ENCODE measurements at regions of chr4 and their contacts with region 1.

Region 1: DNA sequence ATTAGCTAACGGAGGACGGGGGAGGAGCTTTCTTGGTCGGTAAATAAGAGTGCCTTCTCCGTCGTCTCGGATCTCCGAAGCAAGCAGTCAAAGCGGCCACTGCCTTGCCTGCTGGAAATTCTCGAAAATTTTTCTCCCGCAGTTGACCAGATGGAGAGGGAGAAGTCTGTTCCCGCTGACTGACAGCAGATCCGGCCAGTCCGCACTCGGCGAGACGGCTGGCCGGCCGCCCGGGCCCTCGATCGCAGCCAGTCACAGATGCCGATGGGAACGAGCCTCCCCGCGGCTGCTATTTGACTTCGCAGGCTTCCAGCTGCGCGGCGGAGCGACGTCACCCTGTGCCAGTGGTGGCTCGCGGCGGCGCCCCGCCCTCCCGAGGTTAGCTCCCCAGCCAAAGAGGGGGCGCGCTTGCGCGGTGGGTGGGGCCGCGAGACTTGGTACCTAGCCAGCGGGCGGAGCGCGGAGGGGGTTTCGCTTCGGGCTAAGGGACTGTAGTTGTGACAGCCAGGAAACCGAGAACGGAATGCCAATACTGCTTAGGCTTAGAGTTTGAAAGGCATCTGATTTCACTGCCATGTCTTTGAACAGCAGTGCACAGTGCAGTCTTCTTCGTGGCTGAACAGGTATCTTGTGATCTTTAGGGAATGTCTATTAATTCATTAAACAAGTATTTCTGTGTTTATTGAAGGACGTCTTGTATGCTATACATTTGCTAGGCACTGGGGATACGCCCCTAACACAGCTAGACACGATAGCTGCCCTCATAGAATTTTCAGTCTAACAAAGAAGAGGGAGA is at the start of gene PPM1K:
- DNase-seq: peak; percentile 98 to 100 (median 99)
- ATAC-seq: peak; percentile 92
- H3K4me3 ChIP-seq: peak within 1 kb of the TSS; percentile 87
- H3K4me3 Mint-ChIP-seq: peak within 1 kb of the TSS; percentile 90 to 99 (median 97)
- H3K27ac ChIP-seq: peak within 1 kb of the TSS; percentile 96
- H3K27ac Mint-ChIP-seq: peak within 1 kb of the TSS; percentile 92 to 100 (median 99)
- H3K4me1 ChIP-seq: peaks cover 21 to 30% of the 10 kb centered on the region in 2 donors
- H3K4me1 Mint-ChIP-seq: peaks cover 32 to 52% (median 47%) of the 10 kb centered on the region in 7 donors
- H3K27me3 ChIP-seq: no peaks in the 10 kb centered on the region
- H3K27me3 Mint-ChIP-seq: no peaks in the 10 kb centered on the region
- total RNA-seq, gene PPM1K: 72.1 to 92.7 (median 91.9) TPM

Region 2: DNA sequence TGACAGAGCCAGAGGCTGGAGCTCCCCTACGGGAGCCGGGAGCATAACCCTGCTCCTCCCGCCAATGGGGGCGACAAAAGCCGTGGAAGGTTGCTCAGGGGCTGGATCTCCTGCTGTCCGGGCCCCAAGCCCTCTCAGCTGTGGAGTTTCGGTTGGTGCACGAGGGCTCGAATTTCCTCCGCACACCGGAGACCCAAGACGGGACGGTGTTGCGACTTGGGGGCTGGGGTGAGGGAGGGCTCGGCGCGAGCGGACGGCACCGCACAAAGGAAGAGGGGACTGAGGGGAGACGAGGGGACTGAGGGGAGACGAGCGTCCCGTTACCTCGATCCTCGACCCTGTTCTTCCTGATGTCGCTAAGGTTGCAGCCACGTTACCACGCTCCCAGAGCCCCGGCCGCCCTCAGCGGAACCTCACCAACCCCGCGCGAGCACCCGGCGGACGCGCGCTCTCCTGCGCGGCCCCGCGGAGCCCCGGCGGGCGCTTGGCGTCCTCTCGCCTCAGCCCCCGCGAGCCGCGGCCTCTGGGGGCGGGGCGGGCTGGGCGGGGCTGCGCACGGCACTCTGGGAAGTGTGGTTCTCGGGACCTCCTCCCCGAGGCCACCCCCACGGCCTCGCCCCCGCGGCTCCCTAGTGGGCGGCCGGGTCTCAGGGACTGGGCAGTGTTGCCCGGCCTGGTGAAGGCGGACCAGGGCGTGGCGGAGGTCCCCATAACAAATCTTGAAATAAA is 1064.4 kb before region 1 on chr4 and contains the start of gene KLHL8:
- CTCF ChIA-PET with region 1: no interaction called
- POLR2A ChIA-PET with region 1: no interaction called
- intact Hi-C with region 1: loop called in 1 of 2 experiments (anchors 1 kb)
- DNase-seq: peak; percentile 82 to 94 (median 89)
- ATAC-seq: peak; percentile 97
- H3K4me3 ChIP-seq: peak within 1 kb of the TSS; percentile 97
- H3K4me3 Mint-ChIP-seq: peak within 1 kb of the TSS; percentile 73 to 99 (median 94)
- H3K27ac ChIP-seq: peak within 1 kb of the TSS; percentile 92
- H3K27ac Mint-ChIP-seq: peak within 1 kb of the TSS; percentile 71 to 95 (median 91)
- H3K4me1 ChIP-seq: peaks cover 0 to 8% of the 10 kb centered on the region in 2 donors
- H3K4me1 Mint-ChIP-seq: peaks cover 6 to 32% (median 17%) of the 10 kb centered on the region in 7 donors
- H3K27me3 ChIP-seq: no peaks in the 10 kb centered on the region
- H3K27me3 Mint-ChIP-seq: peaks cover 0 to 14% (median 0%) of the 10 kb centered on the region in 5 donors
- total RNA-seq, gene KLHL8: 10.9 to 15.7 (median 11.6) TPM

Region 3: GRCh38 chr4:87783781-87784180 is 500.9 kb before region 1 on chr4:
- CTCF ChIA-PET with region 1: no interaction called
- POLR2A ChIA-PET with region 1: no interaction called
- intact Hi-C with region 1: no loop called
- DNase-seq: no peak
- ATAC-seq: no peak
- H3K4me3 ChIP-seq: no peak overlapping the region
- H3K4me3 Mint-ChIP-seq: no peak overlapping the region
- H3K27ac ChIP-seq: no peak overlapping the region
- H3K27ac Mint-ChIP-seq: no peak overlapping the region
- H3K4me1 ChIP-seq: no peaks in the 10 kb centered on the region
- H3K4me1 Mint-ChIP-seq: no peaks in the 10 kb centered on the region
- H3K27me3 ChIP-seq: no peaks in the 10 kb centered on the region
- H3K27me3 Mint-ChIP-seq: peaks cover 0 to 7% (median 0%) of the 10 kb centered on the region in 5 donors

Region 4: DNA sequence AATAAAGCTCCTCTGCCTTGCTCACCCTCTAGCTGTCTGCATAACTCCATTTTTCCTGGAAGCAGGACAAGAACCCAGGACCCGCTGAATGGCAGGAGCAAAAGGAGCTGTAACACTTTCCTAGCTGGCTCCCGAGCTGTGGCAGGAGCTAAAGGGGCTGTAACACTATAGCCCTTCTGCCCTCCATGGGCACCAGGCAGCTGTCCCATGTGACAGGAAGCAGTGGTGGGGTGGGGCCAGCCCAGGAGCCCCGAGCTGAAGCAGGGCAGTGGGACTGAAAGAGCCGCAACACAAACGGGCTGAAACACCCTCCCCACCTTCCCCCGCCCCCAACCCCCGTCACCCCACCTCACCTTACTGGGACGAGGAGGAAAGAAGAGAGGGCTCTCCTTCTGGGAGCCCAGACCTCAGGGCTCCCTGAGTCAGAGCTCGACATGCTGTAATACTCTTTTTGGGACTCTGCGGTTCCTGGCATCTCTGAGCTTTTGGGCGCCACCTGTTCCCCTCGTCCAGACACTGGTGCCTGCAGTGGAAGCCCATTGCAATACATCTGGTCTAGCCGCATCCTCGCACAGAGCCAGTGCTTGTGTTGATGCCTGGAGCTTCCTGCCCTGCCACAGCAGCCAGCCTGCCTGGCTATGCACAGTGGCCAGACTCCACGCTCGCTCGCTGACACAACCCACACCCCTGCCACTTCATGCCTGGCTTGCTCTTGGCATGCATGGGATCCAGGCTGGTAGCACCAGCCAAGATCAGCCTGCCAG is 39.6 kb before region 1 on chr4:
- CTCF ChIA-PET with region 1: no interaction called
- POLR2A ChIA-PET with region 1: interaction called, 25 read pairs
- intact Hi-C with region 1: loop called in 1 of 2 experiments (anchors 1 kb)
- DNase-seq: peak; percentile 14 to 45 (median 28)
- ATAC-seq: peak; percentile 80
- H3K4me3 ChIP-seq: peak overlapping the region; percentile 46
- H3K4me3 Mint-ChIP-seq: peak overlapping the region; percentile 39 to 86 (median 76)
- H3K27ac ChIP-seq: no peak overlapping the region
- H3K27ac Mint-ChIP-seq: peak overlapping the region in 8 of 9 donors; percentile 17 to 86 (median 55)
- H3K4me1 ChIP-seq: peaks cover 0 to 4% of the 10 kb centered on the region in 2 donors
- H3K4me1 Mint-ChIP-seq: peaks cover 7 to 19% (median 16%) of the 10 kb centered on the region in 7 donors
- H3K27me3 ChIP-seq: no peaks in the 10 kb centered on the region
- H3K27me3 Mint-ChIP-seq: peaks cover 0 to 2% (median 0%) of the 10 kb centered on the region in 5 donors

Region 5: GRCh38 chr4:88369936-88370335 is 85.3 kb after region 1 on chr4:
- CTCF ChIA-PET with region 1: interaction called, 3 read pairs
- POLR2A ChIA-PET with region 1: interaction called, 6 read pairs
- intact Hi-C with region 1: loop called in 1 of 2 experiments (anchors 1 kb)
- DNase-seq: no peak
- ATAC-seq: no peak
- H3K4me3 ChIP-seq: no peak overlapping the region
- H3K4me3 Mint-ChIP-seq: no peak overlapping the region
- H3K27ac ChIP-seq: no peak overlapping the region
- H3K27ac Mint-ChIP-seq: no peak overlapping the region
- H3K4me1 ChIP-seq: no peaks in the 10 kb centered on the region
- H3K4me1 Mint-ChIP-seq: peaks cover 0 to 22% (median 0%) of the 10 kb centered on the region in 7 donors
- H3K27me3 ChIP-seq: no peaks in the 10 kb centered on the region
- H3K27me3 Mint-ChIP-seq: peaks cover 0 to 3% (median 0%) of the 10 kb centered on the region in 5 donors

Region 6: DNA sequence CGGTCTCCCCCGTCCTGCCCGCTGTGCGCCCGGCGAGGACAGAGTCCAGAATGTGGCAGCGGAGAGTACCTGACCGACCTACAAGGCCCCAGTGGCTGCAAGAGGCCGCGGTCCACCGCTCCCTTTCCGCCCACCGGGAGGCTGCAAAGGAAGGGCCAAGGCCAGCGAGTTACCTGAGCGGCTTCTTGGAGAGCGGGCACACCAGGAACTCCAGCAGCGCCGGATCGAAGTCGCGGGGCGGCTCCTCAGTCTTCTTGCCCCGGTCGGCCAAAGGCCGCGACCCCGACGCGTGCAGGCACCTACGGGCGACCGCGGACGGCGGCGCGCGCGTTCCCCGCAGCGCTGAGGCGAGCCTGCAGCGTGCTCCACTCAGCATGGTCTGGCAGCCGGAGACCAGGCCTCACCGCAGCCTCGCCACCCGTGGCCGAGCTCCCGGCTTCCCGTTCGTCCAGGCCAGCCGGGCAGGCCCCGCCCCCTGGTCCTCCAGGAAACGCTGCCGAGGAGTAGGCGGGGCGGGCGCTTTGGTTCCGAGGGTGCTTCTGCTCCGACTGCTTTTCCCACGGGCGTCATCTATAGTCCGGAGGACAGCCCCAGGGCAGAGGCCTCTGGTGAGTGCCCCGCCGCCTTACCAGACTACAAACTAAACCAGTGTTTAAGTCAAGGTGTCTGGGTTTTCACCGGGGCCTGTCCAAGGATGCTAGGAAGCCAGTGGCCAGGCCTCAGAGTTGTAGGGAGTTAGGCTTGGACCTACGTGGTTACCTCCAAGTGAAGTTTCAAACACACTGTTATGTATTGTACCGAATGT is 238.9 kb after region 1 on chr4 and contains the start of gene PYURF:
- CTCF ChIA-PET with region 1: no interaction called
- POLR2A ChIA-PET with region 1: no interaction called
- intact Hi-C with region 1: loop called (anchors 1 kb)
- DNase-seq: peak; percentile 46 to 85 (median 50)
- ATAC-seq: peak; percentile 85
- H3K4me3 ChIP-seq: peak within 1 kb of the TSS; percentile 75
- H3K4me3 Mint-ChIP-seq: peak within 1 kb of the TSS; percentile 88 to 98 (median 92)
- H3K27ac ChIP-seq: peak within 1 kb of the TSS; percentile 79
- H3K27ac Mint-ChIP-seq: peak within 1 kb of the TSS; percentile 88 to 97 (median 93)
- H3K4me1 ChIP-seq: peaks cover 10 to 19% of the 10 kb centered on the region in 2 donors
- H3K4me1 Mint-ChIP-seq: peaks cover 0 to 56% (median 48%) of the 10 kb centered on the region in 7 donors
- H3K27me3 ChIP-seq: no peaks in the 10 kb centered on the region
- H3K27me3 Mint-ChIP-seq: no peaks in the 10 kb centered on the region
- total RNA-seq, gene PYURF: 33.0 to 57.7 (median 47.4) TPM

Region 7: GRCh38 chr4:88823058-88823919 is 538.7 kb after region 1 on chr4:
- CTCF ChIA-PET with region 1: no interaction called
- POLR2A ChIA-PET with region 1: no interaction called
- intact Hi-C with region 1: loop called (anchors 1 kb)
- DNase-seq: peak; percentile 23 to 90 (median 84)
- ATAC-seq: peak; percentile 96
- H3K4me3 ChIP-seq: peak overlapping the region; percentile 62
- H3K4me3 Mint-ChIP-seq: peak overlapping the region; percentile 88 to 99 (median 96)
- H3K27ac ChIP-seq: peak overlapping the region; percentile 83
- H3K27ac Mint-ChIP-seq: peak overlapping the region; percentile 88 to 99 (median 98)
- H3K4me1 ChIP-seq: peaks cover 0 to 13% of the 10 kb centered on the region in 2 donors
- H3K4me1 Mint-ChIP-seq: peaks cover 0 to 46% (median 37%) of the 10 kb centered on the region in 7 donors
- H3K27me3 ChIP-seq: no peaks in the 10 kb centered on the region
- H3K27me3 Mint-ChIP-seq: no peaks in the 10 kb centered on the region

Measured in naive thymus-derived CD4-positive, alpha-beta T cell (primary cell).